GM10248 (cell line): ENCODE measurements at regions of chr11 and their contacts with region 1.

Region 1: GRCh38 chr11:37929100-37929653 is 1331.1 kb upstream of the RAG2 start:
- DNase-seq: no peak
- CTCF ChIP-seq: no peak

Region 2: GRCh38 chr11:37755521-37755920 is 173.7 kb before region 1 on chr11:
- CTCF ChIA-PET with region 1: no interaction called
- POLR2A ChIA-PET with region 1: no interaction called
- DNase-seq: no peak
- CTCF ChIP-seq: no peak

Region 3: DNA sequence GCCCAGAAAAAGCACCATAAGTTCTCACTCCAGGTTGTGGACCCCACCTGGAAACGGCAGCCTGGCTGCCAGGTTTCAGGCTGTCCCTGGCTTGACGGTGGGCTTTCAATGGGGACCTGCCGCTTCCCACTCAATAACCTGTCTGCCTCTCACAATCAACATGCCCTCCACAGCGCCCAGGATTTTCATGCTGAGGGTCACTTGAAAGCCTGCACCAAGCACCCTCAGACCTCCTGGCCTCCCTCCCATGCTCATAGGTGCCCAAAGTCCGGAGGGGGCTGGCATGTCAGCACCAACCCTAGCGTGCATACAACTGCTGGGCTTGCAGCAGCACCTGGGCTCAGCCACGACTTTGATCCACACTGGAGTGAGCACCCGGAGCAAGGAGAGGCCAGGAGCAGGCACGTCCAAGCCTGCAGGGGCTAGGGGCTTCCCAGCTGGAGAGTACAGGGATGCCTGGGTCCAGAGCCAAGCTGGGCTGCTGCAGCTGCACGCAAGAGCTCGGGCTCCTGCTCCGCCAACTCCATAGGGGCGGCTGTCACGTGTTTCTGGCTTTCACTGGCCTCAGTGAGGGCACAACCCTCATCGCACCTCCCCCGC is 116.8 kb before region 1 on chr11:
- CTCF ChIA-PET with region 1: no interaction called
- POLR2A ChIA-PET with region 1: no interaction called
- DNase-seq: no peak
- CTCF ChIP-seq: no peak

Region 4: DNA sequence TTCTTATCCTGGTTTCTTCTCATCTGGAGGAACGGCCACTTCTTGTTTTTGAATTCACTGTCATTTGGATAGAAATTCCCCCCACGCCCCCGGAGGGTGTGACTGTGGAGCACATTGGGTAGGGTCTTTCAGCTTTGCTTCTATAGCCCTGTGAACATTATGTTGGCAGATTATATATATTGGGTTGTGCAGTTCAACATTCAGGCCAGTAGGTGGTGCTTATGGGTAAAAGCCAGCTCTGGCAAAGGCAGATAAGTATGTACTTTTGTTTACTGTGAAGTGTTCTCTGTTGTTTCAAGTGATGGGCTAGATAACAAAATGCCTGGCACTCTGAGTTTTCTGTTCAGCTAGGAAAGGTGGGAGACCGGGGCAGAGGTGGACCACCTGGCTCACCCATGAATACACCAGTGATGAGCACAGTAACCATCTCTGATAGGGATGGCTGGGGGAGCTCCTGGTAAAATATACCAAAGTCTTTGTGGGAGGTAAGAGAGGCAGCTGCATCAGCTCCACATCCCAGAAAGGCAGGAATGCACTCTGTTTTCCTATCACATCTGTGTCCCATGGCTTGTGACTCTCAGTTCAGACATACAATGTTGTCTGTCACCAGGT is 17.1 kb after region 1 on chr11:
- CTCF ChIA-PET with region 1: interaction called, 10 read pairs
- POLR2A ChIA-PET with region 1: no interaction called
- DNase-seq: no peak
- CTCF ChIP-seq: peak; percentile 56